ENCODE measurements at regions of chr17 and their contacts with region 1.

Region 1: DNA sequence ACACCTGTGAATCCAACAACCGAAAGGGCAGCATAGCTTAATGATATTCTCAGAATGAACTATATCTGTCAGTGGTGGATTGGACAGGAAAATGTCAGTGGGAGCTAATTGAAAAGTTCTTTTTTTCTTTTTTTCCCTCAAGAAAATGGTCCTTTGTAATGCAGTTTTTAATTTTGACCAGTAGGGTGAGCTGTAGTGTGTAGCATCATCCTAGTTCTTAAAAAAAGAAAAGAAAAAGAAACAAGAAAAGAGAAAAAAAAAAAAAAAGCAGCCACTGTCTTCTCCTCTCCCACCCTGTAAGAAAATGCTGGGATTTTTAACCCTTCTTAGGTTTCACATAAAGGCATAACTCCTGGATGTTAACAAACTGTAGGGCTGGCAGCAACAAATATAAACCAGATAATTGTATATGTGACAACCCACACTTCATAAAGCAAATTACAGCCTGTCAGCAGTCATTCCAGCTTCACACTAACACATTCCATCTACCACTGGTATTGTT is 78.1 kb downstream of the SKAP1 start:
- DNase-seq: no peak
- H3K4me3 Mint-ChIP-seq: no peak overlapping the region
- H3K27ac Mint-ChIP-seq: no peak overlapping the region
- H3K4me1 Mint-ChIP-seq: no peaks in the 10 kb centered on the region
- H3K27me3 Mint-ChIP-seq: no peaks in the 10 kb centered on the region
- CTCF ChIP-seq: peak; percentile 84

Region 2: GRCh38 chr17:48457080-48457836 is 105.4 kb after region 1 on chr17:
- CTCF ChIA-PET with region 1: interaction called, 3 read pairs
- intact Hi-C with region 1: loop called (anchors 5 kb)
- DNase-seq: peak; percentile 86
- H3K4me3 Mint-ChIP-seq: peak overlapping the region; percentile 70
- H3K27ac Mint-ChIP-seq: no peak overlapping the region
- H3K4me1 Mint-ChIP-seq: peaks cover 16% of the 10 kb centered on the region
- H3K27me3 Mint-ChIP-seq: peaks cover 20% of the 10 kb centered on the region
- CTCF ChIP-seq: peak; percentile 100

Region 3: DNA sequence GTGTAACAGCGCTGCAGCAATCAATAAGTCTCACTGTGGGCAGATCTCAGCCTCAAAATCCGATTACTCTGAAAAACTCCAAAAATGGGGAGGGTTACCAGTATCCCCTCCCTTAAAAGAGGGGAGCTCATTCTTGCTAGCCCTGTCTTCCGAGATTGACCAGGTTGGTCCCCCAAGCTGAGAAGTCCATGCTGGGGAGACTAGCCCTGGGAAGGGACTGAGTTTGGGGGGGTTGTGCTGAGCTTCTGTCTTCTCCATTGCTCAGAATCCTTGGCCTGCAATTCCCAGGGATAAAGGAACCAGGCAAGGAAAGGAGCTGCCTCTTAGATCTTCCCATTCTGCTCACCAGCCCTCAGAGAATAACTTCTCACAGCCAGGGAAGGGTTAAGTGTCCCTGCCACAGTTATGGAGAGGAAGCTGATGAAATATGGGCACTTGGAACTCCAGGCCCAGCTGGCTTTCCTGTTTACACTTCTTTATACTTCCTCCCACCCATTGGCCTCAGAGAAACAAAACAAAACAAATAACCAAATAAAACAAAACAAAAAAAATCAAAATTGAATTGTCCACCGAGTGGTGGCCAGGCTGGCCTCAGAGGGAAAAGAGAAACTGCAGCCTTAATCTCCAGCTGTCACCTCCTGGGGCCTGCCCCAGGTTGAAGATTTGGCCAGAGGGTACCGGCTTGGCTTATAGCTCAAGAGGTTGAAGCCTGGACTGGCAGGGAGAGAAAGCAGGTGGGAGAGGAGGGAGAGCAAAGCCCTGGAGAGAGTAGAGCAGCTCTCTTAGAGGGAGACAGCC is 235.6 kb after region 1 on chr17:
- CTCF ChIA-PET with region 1: interaction called, 10 read pairs
- intact Hi-C with region 1: no loop called
- DNase-seq: no peak
- H3K4me3 Mint-ChIP-seq: peak overlapping the region; percentile 88
- H3K27ac Mint-ChIP-seq: peak overlapping the region; percentile 95
- H3K4me1 Mint-ChIP-seq: peaks cover 80% of the 10 kb centered on the region
- H3K27me3 Mint-ChIP-seq: peaks cover 16% of the 10 kb centered on the region
- CTCF ChIP-seq: no peak